Activated T-helper 2 cell treated with anti-CD3 and anti-CD28 coated beads, Interferon-gamma antibody, Interleukin-2, Interleukin-4, amounts not matched to agents 10 μg/mL and 5 μg/mL and 100 μg/mL, durations not matched to agents 14 hours and 24 hours and 36 hours (primary cell): ENCODE measurements at regions of chr14 and their contacts with region 1.

Region 1: GRCh38 chr14:70622111-70622712 is 19.5 kb upstream of the TTC9 start:
- DNase-seq: peak; percentile 27
- H3K4me3 Mint-ChIP-seq: no peak overlapping the region
- H3K27ac Mint-ChIP-seq: no peak overlapping the region
- H3K4me1 Mint-ChIP-seq: peaks cover 2% of the 10 kb centered on the region
- H3K27me3 Mint-ChIP-seq: peaks cover 23% of the 10 kb centered on the region

Region 2: DNA sequence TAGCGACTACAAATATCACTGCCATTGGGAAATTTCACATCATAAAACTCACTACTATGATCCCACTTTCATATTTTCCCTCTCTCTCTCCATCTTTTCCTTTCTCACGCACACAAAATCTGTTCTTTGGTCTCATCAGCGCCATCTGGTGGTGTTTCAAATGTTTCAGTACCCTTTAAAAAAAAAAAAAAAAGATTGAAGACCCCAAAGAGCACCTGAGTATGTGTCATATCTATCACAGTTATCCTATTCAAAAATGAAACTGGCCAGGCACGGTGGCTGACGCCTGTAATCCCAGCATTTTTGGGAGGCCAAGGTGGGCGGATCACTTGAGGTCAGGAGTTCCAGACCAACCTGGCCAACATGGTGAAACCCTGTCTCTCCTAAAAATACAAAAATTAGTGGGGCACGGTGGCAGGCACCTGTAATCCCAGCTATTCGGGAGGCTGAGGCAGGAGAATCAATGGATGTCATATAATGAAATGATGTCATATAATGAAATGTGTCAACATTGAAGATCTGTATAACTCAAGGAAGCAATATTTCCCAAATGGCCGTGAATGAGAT is 91.9 kb after region 1 on chr14:
- intact Hi-C with region 1: loop called (anchors 1 kb)
- DNase-seq: no peak
- H3K4me3 Mint-ChIP-seq: no peak overlapping the region
- H3K27ac Mint-ChIP-seq: no peak overlapping the region
- H3K4me1 Mint-ChIP-seq: peaks cover 2% of the 10 kb centered on the region
- H3K27me3 Mint-ChIP-seq: peaks cover 20% of the 10 kb centered on the region

Region 3: GRCh38 chr14:70816525-70816924 is 194.3 kb after region 1 on chr14:
- intact Hi-C with region 1: loop called (anchors 5 kb)
- DNase-seq: no peak
- H3K4me3 Mint-ChIP-seq: no peak overlapping the region
- H3K27ac Mint-ChIP-seq: no peak overlapping the region
- H3K4me1 Mint-ChIP-seq: peaks cover 26% of the 10 kb centered on the region
- H3K27me3 Mint-ChIP-seq: peaks cover 6% of the 10 kb centered on the region